Ascending aorta (tissue), 2 donors: ENCODE measurements at regions of chr3 and their contacts with region 1.

Region 1: DNA sequence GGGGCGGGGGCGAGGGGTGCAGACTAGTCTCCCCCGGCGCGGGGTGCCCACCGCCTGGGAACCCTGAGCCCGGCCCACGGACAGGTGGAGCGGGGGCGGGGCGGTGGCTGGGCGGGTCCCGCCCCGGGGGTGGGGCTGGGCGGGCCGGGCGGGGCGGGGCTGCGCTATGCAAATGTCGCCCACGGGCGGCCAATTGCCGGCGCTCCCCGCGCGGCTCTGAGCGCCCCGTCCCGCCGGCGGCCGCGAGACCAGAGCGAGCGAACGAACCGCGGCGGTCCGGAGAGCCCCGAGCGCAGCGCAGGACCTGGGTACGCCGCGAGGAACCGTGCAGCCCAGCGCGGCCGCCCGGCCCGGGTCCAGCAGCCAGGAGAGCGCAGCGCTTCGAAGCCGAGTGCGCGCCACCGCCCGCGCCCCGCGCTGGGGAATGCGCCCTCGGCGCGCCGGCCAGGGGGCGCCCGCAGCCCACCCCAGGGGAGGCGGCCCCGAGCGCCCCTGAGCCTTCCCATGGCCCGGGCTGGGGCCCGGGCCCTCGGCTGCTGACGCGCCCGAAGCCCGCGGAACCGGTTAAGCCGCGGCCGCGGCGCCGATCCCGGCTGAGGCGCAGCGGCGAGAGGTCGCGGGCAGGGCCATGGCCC is at the start of gene SEMA3F:
- DNase-seq: peak in 1 of 2 donors; percentile 78
- H3K4me3 ChIP-seq: peak within 1 kb of the TSS; percentile 62 to 75
- H3K27ac ChIP-seq: peak within 1 kb of the TSS; percentile 62 to 94
- H3K4me1 ChIP-seq: peaks cover 17 to 41% of the 10 kb centered on the region in 2 donors
- H3K27me3 ChIP-seq: no peaks in the 10 kb centered on the region
- CTCF ChIP-seq: peak in 1 of 3 experiments; percentile 33
- total RNA-seq, gene SEMA3F: 75.0 TPM

Region 2: GRCh38 chr3:49855662-49856061 is 299.3 kb before region 1 on chr3:
- intact Hi-C with region 1: no loop called
- DNase-seq: no peak
- H3K4me3 ChIP-seq: peak overlapping the region; percentile 64 to 80
- H3K27ac ChIP-seq: no peak overlapping the region
- H3K4me1 ChIP-seq: peaks cover 8% of the 10 kb centered on the region in 2 donors
- H3K27me3 ChIP-seq: no peaks in the 10 kb centered on the region
- CTCF ChIP-seq: no peak

Region 3: DNA sequence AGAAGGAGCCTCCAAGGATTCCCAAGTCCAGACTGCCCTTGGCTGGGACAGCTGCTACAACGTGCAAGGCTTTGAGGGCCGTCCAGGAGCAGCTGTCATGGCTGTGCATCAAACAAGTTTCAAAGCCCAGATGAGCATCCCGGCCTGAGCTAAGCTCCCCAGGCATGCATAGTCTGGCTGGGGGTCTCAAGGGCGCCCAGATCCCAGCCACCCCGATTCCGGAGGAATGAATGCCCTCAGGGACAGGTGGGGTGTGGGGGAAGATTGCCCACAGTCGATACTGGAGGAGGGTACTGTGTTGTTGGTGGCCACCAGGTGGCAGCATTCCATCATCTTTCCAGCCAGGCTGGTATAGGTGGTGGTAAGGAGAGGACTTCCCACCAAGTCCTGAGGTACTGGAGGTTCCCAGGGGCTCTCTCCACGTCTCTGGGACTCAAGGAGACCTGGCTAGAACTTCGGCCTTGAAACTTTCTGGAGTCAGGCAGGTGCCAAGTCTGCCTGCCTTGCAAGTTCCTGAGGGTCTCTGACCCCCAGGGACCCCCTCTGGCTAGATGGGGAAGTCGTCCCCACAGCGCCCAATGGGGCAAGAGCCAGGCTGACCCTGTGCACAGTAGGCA is 33.4 kb before region 1 on chr3:
- intact Hi-C with region 1: loop called (anchors 2 kb)
- DNase-seq: peak in 1 of 2 donors; percentile 82
- H3K4me3 ChIP-seq: no peak overlapping the region
- H3K27ac ChIP-seq: no peak overlapping the region
- H3K4me1 ChIP-seq: peaks cover 1 to 27% of the 10 kb centered on the region in 2 donors
- H3K27me3 ChIP-seq: no peaks in the 10 kb centered on the region
- CTCF ChIP-seq: peak; percentile 75 to 88 (median 79)

Region 4: GRCh38 chr3:50170689-50171088 is 15.7 kb after region 1 on chr3:
- intact Hi-C with region 1: loop called (anchors 1 kb)
- DNase-seq: no peak
- H3K4me3 ChIP-seq: no peak overlapping the region
- H3K27ac ChIP-seq: peak overlapping the region in 1 of 2 donors; percentile 76
- H3K4me1 ChIP-seq: peaks cover 11 to 38% of the 10 kb centered on the region in 2 donors
- H3K27me3 ChIP-seq: no peaks in the 10 kb centered on the region
- CTCF ChIP-seq: no peak

Region 5: GRCh38 chr3:50192689-50193141 is 37.8 kb after region 1 on chr3:
- intact Hi-C with region 1: loop called (anchors 2 kb)
- DNase-seq: peak in 1 of 2 donors; percentile 86
- H3K4me3 ChIP-seq: peak overlapping the region in 1 of 2 donors; percentile 39
- H3K27ac ChIP-seq: no peak overlapping the region
- H3K4me1 ChIP-seq: peaks cover 10 to 15% of the 10 kb centered on the region in 2 donors
- H3K27me3 ChIP-seq: peaks cover 18% of the 10 kb centered on the region
- CTCF ChIP-seq: peak; percentile 82 to 92 (median 91)

Region 6: GRCh38 chr3:50272911-50273693 is 118.1 kb after region 1 on chr3:
- intact Hi-C with region 1: no loop called
- DNase-seq: peak in 1 of 2 donors; percentile 91
- H3K4me3 ChIP-seq: peak overlapping the region; percentile 14 to 60
- H3K27ac ChIP-seq: peak overlapping the region in 1 of 2 donors; percentile 3
- H3K4me1 ChIP-seq: peaks cover 12 to 24% of the 10 kb centered on the region in 2 donors
- H3K27me3 ChIP-seq: no peaks in the 10 kb centered on the region
- CTCF ChIP-seq: peak; percentile 97 to 99 (median 99)